Natural killer cell (primary cell): ENCODE measurements at regions of chr12 and their contacts with region 1.

Region 1: DNA sequence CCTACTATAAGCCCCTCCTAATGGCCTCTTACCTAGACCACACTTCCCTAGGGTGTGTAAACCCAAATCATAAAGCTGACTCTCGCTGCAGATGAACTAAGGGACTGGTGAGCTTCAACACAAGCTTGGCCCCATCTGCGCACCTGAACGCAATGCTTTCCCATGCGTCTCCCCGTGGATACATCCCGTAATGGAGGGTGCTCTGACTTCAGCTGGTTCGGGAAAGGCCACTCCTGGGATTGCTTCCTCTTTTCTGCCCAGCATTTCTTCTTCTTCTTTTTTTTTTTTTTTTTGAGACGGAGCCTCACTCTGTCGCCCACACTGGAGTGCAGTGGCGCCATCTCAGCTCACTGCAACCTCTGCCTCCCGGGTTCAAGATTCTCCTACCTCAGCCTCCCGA is 27.7 kb upstream of the ETFBKMT start:
- DNase-seq: no peak
- ATAC-seq: no peak
- H3K4me3 ChIP-seq: no peak overlapping the region
- H3K4me3 Mint-ChIP-seq: no peak overlapping the region
- H3K27ac ChIP-seq: no peak overlapping the region
- H3K27ac Mint-ChIP-seq: no peak overlapping the region
- H3K4me1 ChIP-seq: no peaks in the 10 kb centered on the region
- H3K4me1 Mint-ChIP-seq: peaks cover 6 to 8% of the 10 kb centered on the region in 2 donors
- H3K27me3 ChIP-seq: no peaks in the 10 kb centered on the region
- H3K27me3 Mint-ChIP-seq: peaks cover 0 to 3% of the 10 kb centered on the region in 2 donors
- CTCF ChIP-seq: no peak

Region 2: GRCh38 chr12:31250179-31250578 is 381.6 kb before region 1 on chr12:
- intact Hi-C with region 1: loop called (anchors 5 kb)
- DNase-seq: no peak
- ATAC-seq: no peak
- H3K4me3 ChIP-seq: no peak overlapping the region
- H3K4me3 Mint-ChIP-seq: no peak overlapping the region
- H3K27ac ChIP-seq: no peak overlapping the region
- H3K27ac Mint-ChIP-seq: no peak overlapping the region
- H3K4me1 ChIP-seq: no peaks in the 10 kb centered on the region
- H3K4me1 Mint-ChIP-seq: peaks cover 0 to 5% of the 10 kb centered on the region in 2 donors
- H3K27me3 ChIP-seq: no peaks in the 10 kb centered on the region
- H3K27me3 Mint-ChIP-seq: no peaks in the 10 kb centered on the region
- CTCF ChIP-seq: no peak

Region 3: DNA sequence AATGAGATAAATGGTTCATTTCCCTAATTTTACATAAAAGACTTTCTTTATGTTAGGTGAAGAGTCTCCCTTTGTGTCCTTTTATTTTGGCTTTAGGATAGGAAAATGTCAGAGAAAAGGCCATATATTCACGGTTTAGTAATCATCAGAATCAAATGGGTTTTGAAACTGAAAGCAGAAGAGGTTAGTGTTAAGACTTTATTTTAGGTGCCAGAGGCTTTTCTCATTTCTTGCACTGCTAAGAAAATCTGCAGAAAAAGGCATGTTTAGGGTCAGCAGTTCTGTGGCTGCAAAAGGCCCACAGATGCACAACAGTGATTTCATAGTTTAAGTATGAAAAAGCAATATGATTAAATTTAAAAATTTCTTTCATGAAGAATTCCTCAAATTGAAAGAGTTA is 225.4 kb before region 1 on chr12:
- intact Hi-C with region 1: loop called (anchors 1 kb)
- DNase-seq: no peak
- ATAC-seq: no peak
- H3K4me3 ChIP-seq: no peak overlapping the region
- H3K4me3 Mint-ChIP-seq: no peak overlapping the region
- H3K27ac ChIP-seq: no peak overlapping the region
- H3K27ac Mint-ChIP-seq: no peak overlapping the region
- H3K4me1 ChIP-seq: peaks cover 5% of the 10 kb centered on the region
- H3K4me1 Mint-ChIP-seq: no peaks in the 10 kb centered on the region
- H3K27me3 ChIP-seq: no peaks in the 10 kb centered on the region
- H3K27me3 Mint-ChIP-seq: peaks cover 0 to 2% of the 10 kb centered on the region in 2 donors
- CTCF ChIP-seq: no peak